Adrenal gland (tissue), 19 donors: ENCODE measurements at regions of chr17 and their contacts with region 1.

Region 1: GRCh38 chr17:39813631-39814030 is 50.5 kb downstream of the IKZF3 start:
- DNase-seq: no peak
- H3K4me3 ChIP-seq: no peak overlapping the region
- H3K27ac ChIP-seq: no peak overlapping the region
- H3K4me1 ChIP-seq: no peaks in the 10 kb centered on the region
- H3K27me3 ChIP-seq: peaks cover 7% of the 10 kb centered on the region
- CTCF ChIP-seq: no peak
- POLR2A ChIP-seq: no peak

Region 2: DNA sequence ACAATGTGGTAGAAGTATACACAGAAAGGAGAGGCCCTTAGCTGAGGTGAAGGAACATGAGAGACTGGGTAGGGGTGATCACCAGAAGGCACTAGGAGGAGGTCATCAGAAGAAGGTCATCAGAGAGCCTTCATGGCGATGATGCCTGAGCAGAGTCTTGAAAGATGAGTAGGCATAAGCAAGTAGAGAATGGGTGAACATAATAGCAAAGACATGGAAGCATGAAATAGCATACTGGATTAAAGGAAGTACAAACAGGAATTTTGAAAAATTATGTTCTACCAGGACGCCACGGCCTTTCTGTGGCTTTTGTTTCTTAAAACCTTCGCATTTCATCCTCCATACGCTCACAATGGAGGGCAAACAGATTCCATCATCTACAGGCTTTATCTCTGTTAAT is 47.6 kb after region 1 on chr17:
- intact Hi-C with region 1: no loop called
- DNase-seq: no peak
- H3K4me3 ChIP-seq: no peak overlapping the region
- H3K27ac ChIP-seq: no peak overlapping the region
- H3K4me1 ChIP-seq: peaks cover 3 to 9% of the 10 kb centered on the region in 2 donors
- H3K27me3 ChIP-seq: peaks cover 83% of the 10 kb centered on the region
- CTCF ChIP-seq: no peak
- POLR2A ChIP-seq: no peak

Region 3: DNA sequence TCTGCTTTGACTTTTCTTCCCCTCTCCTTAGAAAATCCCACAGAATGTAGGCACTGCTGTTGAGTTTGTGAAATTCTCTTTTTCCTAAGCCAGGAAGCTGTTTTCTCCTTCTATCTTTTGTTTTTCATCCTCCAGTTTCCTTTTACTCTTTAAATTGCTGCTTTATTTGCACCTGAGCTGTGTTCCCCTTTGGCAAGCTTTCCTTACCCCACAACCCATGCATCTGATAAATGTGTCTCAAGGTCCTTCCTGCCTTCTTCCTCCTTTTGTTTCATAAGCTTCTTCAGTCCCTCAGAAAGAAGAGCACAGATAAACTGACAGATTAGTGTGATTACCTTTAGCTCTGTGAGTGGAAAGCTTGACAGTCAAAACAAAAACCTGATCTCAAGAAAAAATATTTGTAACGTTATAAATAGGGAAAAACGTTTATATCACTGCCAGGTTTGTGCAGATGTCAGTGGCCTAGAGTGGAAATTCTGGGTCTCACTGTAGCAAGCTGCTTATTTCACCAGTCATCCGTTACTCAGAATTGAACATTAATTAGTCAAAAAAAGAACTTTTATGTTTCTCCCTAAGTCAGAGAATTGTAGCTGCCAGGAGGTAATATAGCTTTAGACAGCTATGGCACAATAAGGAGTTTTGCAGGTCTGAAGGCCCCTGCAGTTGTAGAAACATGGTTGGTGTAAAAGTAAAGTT is 81.2 kb after region 1 on chr17:
- intact Hi-C with region 1: loop called in 1 of 2 experiments (anchors 10 kb)
- DNase-seq: no peak
- H3K4me3 ChIP-seq: no peak overlapping the region
- H3K27ac ChIP-seq: no peak overlapping the region
- H3K4me1 ChIP-seq: no peaks in the 10 kb centered on the region
- H3K27me3 ChIP-seq: peaks cover 23% of the 10 kb centered on the region
- CTCF ChIP-seq: no peak
- POLR2A ChIP-seq: no peak